ENCODE measurements at regions of chr14 and their contacts with region 1.

Region 1: DNA sequence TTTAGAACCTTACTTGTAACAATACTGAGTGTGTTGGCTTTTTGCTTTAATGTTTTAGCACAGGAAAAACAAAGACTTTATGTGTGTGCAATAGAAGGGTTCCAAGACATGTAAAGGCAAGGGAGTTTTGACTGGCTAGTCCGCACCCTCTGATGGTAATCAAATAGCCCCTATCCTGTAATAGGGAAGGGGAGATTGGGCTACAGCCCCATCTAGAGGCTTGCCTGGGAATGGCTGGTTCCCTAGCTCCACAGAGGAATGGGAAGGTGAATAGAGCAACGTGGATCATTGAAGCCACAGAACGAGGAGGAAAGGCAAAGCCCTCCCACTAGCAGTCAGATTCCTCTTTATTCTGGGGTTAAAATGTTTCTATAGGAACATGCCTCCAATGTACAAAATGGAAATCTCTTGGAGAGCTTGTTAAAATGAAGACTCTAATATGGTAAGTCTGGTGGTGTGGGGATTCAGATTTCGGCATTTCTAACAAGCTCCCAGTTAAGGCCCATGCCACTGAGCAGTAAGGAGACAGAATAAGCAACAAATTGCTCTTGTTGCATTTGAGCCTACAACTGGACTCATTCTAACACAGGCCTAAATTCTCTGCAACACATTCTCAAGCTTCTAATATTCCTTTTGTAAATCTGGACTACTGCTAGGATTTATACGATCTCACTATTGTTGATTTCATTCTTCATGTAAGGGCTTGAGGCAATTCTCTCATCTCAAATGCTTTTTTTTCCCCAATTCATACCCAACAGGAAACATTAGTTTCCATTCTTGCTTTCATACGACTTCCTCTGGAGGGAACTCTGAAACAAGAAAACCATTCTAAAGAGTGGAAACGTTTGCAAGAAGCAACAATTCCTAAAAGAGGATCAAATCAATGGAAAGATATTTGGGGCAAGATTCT is 57.1 kb downstream of the NIN start:
- DNase-seq: peak; percentile 50
- ATAC-seq: peak; percentile 69
- H3K4me3 ChIP-seq: no peak overlapping the region
- H3K27ac ChIP-seq: no peak overlapping the region
- H3K4me1 ChIP-seq: peaks cover 16% of the 10 kb centered on the region
- H3K27me3 ChIP-seq: no peaks in the 10 kb centered on the region
- CTCF ChIP-seq: peak; percentile 85
- POLR2A ChIP-seq: no peak
- RAD21 ChIP-seq: peak; percentile 83

Region 2: DNA sequence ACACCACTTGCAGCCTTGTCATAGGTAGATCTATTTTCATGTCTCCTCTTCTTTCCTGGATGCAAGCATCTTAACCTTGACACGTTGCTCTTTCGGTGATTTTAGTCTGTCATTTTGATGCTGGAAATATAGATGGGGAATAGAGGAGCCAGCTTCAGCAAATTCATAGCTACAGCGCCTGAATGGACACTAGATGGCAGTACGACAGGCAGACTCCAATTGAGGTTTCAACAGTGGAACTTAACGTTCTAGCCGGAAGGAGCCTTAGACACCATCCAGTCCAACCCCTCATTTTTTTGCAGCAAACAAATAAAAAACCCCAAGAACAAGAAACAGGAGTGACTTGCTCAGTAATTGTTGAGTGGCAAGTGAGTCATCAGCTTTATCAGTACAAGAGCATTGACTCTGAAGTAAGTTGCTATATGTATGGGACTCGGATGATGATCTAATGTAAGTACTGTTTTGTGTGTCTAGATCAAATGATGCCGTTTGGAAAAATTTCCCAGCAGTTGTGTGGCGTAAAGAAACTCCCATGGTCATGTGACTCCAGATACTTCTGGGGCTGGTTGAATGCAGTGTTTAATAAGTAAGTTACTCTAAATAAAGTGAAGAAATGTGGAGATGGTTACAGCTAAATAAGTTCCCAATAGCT is 452.8 kb before region 1 on chr14:
- CTCF ChIA-PET with region 1: no interaction called
- POLR2A ChIA-PET with region 1: no interaction called
- dilution Hi-C with region 1: no loop called
- in situ Hi-C with region 1: no loop called
- intact Hi-C with region 1: loop called (anchors 5 kb)
- DNase-seq: peak; percentile 98
- ATAC-seq: peak; percentile 95
- H3K4me3 ChIP-seq: peak overlapping the region; percentile 49; the same call in 1 of the 2 replicates
- H3K27ac ChIP-seq: no peak overlapping the region
- H3K4me1 ChIP-seq: peaks cover 9% of the 10 kb centered on the region
- H3K27me3 ChIP-seq: no peaks in the 10 kb centered on the region
- CTCF ChIP-seq: peak; percentile 88
- POLR2A ChIP-seq: no peak
- RAD21 ChIP-seq: peak; percentile 81

Region 3: GRCh38 chr14:50542941-50543418 is 230.9 kb before region 1 on chr14:
- CTCF ChIA-PET with region 1: interaction called, 6 read pairs
- POLR2A ChIA-PET with region 1: no interaction called
- dilution Hi-C with region 1: no loop called
- in situ Hi-C with region 1: loop called (anchors 5 kb)
- intact Hi-C with region 1: loop called (anchors 1 kb)
- DNase-seq: peak; percentile 61
- ATAC-seq: peak; percentile 79
- H3K4me3 ChIP-seq: no peak overlapping the region
- H3K27ac ChIP-seq: no peak overlapping the region
- H3K4me1 ChIP-seq: no peaks in the 10 kb centered on the region
- H3K27me3 ChIP-seq: no peaks in the 10 kb centered on the region; the same call in 1 of the 2 replicates
- CTCF ChIP-seq: peak; percentile 56
- POLR2A ChIP-seq: no peak
- RAD21 ChIP-seq: peak; percentile 58

Region 4: DNA sequence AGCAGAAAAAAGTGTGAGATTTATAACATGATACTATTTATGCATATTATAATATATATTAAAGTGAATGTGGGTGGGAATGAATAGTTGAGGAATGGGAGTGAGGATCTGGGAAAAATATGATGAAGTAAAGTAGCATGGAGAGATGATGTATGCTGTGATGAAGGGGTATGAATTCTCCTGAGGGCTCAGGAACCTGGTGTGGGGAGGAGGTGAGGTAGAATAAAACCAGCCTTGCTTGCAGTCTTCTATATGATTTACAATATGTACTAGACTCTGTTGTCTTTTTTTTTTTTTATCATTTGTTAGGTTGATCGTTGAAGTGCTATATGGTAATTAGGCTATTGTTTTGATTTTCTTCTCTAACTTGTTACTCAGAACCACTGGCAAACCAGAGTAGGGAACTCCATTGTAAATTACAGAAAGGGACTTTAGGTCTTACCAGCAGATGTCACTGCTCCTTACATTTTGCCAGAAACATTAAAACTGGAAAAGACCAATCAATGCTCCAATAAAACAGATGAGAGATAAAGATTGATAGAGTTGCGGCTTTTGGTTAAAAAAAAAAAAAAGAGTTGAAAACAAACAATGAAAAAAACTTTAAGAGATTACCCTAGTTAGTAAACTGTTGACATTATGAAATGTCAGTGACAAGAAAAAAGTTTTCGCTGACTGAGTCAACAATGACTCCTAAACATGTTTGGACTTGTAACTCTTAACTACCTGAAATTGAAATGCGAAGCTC is 174.0 kb before region 1 on chr14:
- CTCF ChIA-PET with region 1: interaction called, 14 read pairs
- POLR2A ChIA-PET with region 1: no interaction called
- dilution Hi-C with region 1: no loop called
- in situ Hi-C with region 1: no loop called
- intact Hi-C with region 1: loop called (anchors 1 kb)
- DNase-seq: peak; percentile 60
- ATAC-seq: peak; percentile 65; the same call in 1 of the 2 replicates
- H3K4me3 ChIP-seq: no peak overlapping the region
- H3K27ac ChIP-seq: no peak overlapping the region
- H3K4me1 ChIP-seq: peaks cover 1% of the 10 kb centered on the region; the same call in 1 of the 2 replicates
- H3K27me3 ChIP-seq: no peaks in the 10 kb centered on the region
- CTCF ChIP-seq: peak; percentile 66
- POLR2A ChIP-seq: no peak
- RAD21 ChIP-seq: peak; percentile 67

Region 5: GRCh38 chr14:50619556-50620141 is 154.2 kb before region 1 on chr14:
- CTCF ChIA-PET with region 1: interaction called, 4 read pairs
- POLR2A ChIA-PET with region 1: no interaction called
- dilution Hi-C with region 1: no loop called
- in situ Hi-C with region 1: no loop called
- intact Hi-C with region 1: loop called (anchors 1 kb)
- DNase-seq: peak; percentile 65
- ATAC-seq: peak; percentile 89
- H3K4me3 ChIP-seq: no peak overlapping the region
- H3K27ac ChIP-seq: no peak overlapping the region
- H3K4me1 ChIP-seq: no peaks in the 10 kb centered on the region
- H3K27me3 ChIP-seq: no peaks in the 10 kb centered on the region
- CTCF ChIP-seq: peak; percentile 62
- POLR2A ChIP-seq: no peak
- RAD21 ChIP-seq: peak; percentile 63

Region 6: GRCh38 chr14:50667996-50668825 is 105.7 kb before region 1 on chr14 and contains the start of gene SAV1:
- CTCF ChIA-PET with region 1: interaction called, 4 read pairs
- POLR2A ChIA-PET with region 1: interaction called, 7 read pairs
- dilution Hi-C with region 1: no loop called
- in situ Hi-C with region 1: no loop called
- intact Hi-C with region 1: loop called (anchors 2 kb)
- DNase-seq: peak; percentile 87
- ATAC-seq: peak; percentile 86
- H3K4me3 ChIP-seq: peak within 1 kb of the TSS; percentile 90
- H3K27ac ChIP-seq: peak within 1 kb of the TSS; percentile 98
- H3K4me1 ChIP-seq: peaks cover 13% of the 10 kb centered on the region
- H3K27me3 ChIP-seq: no peaks in the 10 kb centered on the region
- CTCF ChIP-seq: no peak
- POLR2A ChIP-seq: peak; percentile 98
- RAD21 ChIP-seq: no peak
- total RNA-seq, gene SAV1: 18.8 and 25.0 TPM in 2 replicates

Region 7: DNA sequence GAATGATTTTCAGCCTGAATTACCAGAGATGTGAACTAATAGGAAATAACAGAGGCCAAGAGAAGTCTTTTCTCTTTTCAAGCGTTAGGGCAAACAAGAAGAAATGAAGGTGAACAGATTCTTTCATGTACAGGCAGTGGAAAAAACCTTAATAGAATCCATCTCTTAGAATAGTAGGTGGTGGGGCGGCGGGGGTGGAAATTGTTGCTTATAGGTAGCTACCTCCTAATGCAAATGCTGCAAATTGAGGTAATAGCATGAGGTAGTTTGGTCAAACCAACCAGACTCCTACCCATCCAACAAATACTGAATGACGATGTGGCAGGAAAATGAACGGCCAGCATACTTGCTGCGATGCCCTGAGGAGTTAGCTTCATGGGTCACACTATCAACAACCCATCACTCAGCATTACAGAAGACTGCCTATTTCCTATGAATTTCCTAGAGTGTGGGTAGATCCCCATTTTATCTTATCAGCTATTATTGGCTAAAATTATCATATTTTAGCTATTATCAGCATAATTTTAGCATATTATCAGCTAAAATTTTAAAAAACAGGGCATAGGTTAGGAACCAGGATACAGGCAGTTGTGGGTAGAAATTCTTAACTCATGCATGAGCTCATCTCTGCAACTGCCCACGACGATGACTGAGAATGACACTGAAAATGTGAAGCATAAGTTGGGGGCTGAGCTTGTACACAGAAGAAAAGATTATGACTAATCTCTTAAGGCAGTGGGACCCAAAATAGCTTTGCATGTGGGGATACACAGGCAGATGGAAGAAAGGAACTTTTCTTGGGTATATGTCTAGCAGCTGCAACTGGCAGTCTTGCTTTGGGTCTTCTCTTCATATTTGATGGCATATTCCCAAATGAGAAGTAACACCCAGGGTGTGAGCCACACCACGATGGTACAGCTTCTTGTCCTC is 11.6 kb before region 1 on chr14:
- CTCF ChIA-PET with region 1: interaction called, 10 read pairs
- POLR2A ChIA-PET with region 1: no interaction called
- dilution Hi-C with region 1: no loop called
- in situ Hi-C with region 1: no loop called
- intact Hi-C with region 1: no loop called
- DNase-seq: peak; percentile 94
- ATAC-seq: peak; percentile 91
- H3K4me3 ChIP-seq: no peak overlapping the region
- H3K27ac ChIP-seq: no peak overlapping the region; the same call in 1 of the 2 replicates
- H3K4me1 ChIP-seq: peaks cover 14% of the 10 kb centered on the region
- H3K27me3 ChIP-seq: no peaks in the 10 kb centered on the region
- CTCF ChIP-seq: no peak
- POLR2A ChIP-seq: no peak
- RAD21 ChIP-seq: no peak